Dendritic cell treated with granulocyte-macrophage colony-stimulating factor and Interleukin-4, amounts not matched to agents 40 ng/mL and 50 ng/mL, for 4 days (primary cell): ENCODE measurements at regions of chr5 and their contacts with region 1.

Region 1: DNA sequence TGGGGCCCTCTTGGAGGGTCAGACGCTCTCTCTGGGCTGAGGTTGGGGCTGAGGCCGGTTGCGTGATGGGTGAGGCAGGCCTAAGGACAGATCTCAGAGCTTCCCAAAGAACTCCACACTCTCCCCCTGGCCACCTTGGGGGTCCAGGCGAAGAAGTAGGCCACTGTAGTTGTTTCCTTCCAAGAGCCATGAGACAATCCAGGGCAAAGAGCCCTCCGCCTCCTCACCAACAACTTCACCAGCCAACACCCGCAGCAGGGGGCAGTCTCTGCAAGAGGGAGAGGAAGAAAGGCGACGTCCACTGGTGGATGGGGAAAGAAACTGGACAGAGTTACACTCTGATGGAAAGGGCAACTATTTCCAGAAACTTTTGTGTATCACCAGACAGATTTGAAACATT is 10.7 kb downstream of the SLC35A4 start:
- H3K4me3 Mint-ChIP-seq: no peak overlapping the region
- H3K27ac Mint-ChIP-seq: peak overlapping the region; percentile 63
- H3K4me1 Mint-ChIP-seq: peaks cover 38% of the 10 kb centered on the region
- H3K27me3 Mint-ChIP-seq: no peaks in the 10 kb centered on the region

Region 2: GRCh38 chr5:140632150-140633020 is 57.1 kb after region 1 on chr5:
- intact Hi-C with region 1: loop called (anchors 1 kb)
- H3K4me3 Mint-ChIP-seq: peak overlapping the region; percentile 77
- H3K27ac Mint-ChIP-seq: peak overlapping the region; percentile 84
- H3K4me1 Mint-ChIP-seq: peaks cover 43% of the 10 kb centered on the region
- H3K27me3 Mint-ChIP-seq: no peaks in the 10 kb centered on the region

Region 3: DNA sequence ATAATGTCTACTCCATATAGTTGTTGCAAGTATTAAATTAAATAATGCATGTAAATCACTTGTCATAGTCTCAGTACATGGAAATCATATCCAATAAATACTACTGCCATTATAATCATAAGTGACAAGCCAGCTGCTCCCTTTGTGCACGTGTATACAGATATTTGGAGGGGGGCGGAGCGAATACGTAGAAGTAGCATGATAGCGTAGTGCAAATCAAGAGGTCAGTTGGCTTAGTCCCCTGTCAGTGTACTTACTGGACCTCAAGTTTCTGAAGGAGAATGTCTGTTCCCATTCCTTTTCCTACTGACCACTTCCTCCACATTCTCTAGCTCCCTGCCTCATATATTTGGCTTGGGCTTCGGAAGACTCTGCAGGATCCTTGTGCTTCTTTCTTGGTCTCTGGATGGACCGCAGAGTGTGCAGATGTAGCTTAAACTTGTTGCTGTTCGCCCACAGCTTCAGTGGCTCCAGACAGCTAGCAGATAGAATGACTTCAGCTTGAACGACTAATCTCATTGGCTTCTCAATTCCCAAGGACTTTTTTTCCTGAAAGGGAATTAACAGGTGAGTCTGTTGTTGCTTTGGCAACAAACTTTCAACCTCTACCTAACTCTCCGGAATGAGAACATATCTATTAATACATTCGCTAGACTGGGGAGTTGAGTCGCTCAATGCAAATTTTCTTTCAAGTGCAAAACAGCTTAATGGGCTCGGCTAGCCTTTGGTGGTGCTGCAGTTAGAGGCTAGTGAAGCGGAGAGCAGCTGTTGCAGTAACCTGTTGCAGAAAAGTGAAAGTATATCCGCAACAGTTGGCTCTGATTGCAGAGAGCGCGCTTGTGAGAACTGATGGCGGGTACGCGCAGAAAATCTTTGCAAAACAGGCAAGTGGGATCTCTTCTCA is 475.6 kb after region 1 on chr5 and contains the start of gene PCDHB1:
- intact Hi-C with region 1: no loop called
- H3K4me3 Mint-ChIP-seq: no peak within 1 kb of the TSS
- H3K27ac Mint-ChIP-seq: no peak within 1 kb of the TSS
- H3K4me1 Mint-ChIP-seq: no peaks in the 10 kb centered on the region
- H3K27me3 Mint-ChIP-seq: peaks cover 18% of the 10 kb centered on the region